CD14-positive monocyte (primary cell): ENCODE measurements at regions of chr3 and their contacts with region 1.

Region 1: GRCh38 chr3:87710511-87710910 is 348.3 kb downstream of the CGGBP1 start:
- DNase-seq: peak in 1 of 3 donors; percentile 4
- H3K4me3 ChIP-seq: no peak overlapping the region
- H3K4me3 Mint-ChIP-seq: no peak overlapping the region
- H3K27ac ChIP-seq: no peak overlapping the region
- H3K27ac Mint-ChIP-seq: no peak overlapping the region
- H3K4me1 ChIP-seq: peaks cover 13 to 26% of the 10 kb centered on the region in 2 donors
- H3K4me1 Mint-ChIP-seq: peaks cover 29% of the 10 kb centered on the region
- H3K27me3 ChIP-seq: no peaks in the 10 kb centered on the region
- H3K27me3 Mint-ChIP-seq: peaks cover 0 to 1% (median 1%) of the 10 kb centered on the region in 3 donors
- CTCF ChIP-seq: no peak

Region 2: GRCh38 chr3:87742250-87742649 is 31.7 kb after region 1 on chr3:
- intact Hi-C with region 1: no loop called
- DNase-seq: no peak
- H3K4me3 ChIP-seq: no peak overlapping the region
- H3K4me3 Mint-ChIP-seq: no peak overlapping the region
- H3K27ac ChIP-seq: no peak overlapping the region
- H3K27ac Mint-ChIP-seq: no peak overlapping the region
- H3K4me1 ChIP-seq: no peaks in the 10 kb centered on the region
- H3K4me1 Mint-ChIP-seq: no peaks in the 10 kb centered on the region
- H3K27me3 ChIP-seq: no peaks in the 10 kb centered on the region
- H3K27me3 Mint-ChIP-seq: peaks cover 0 to 2% (median 0%) of the 10 kb centered on the region in 3 donors
- CTCF ChIP-seq: no peak

Region 3: DNA sequence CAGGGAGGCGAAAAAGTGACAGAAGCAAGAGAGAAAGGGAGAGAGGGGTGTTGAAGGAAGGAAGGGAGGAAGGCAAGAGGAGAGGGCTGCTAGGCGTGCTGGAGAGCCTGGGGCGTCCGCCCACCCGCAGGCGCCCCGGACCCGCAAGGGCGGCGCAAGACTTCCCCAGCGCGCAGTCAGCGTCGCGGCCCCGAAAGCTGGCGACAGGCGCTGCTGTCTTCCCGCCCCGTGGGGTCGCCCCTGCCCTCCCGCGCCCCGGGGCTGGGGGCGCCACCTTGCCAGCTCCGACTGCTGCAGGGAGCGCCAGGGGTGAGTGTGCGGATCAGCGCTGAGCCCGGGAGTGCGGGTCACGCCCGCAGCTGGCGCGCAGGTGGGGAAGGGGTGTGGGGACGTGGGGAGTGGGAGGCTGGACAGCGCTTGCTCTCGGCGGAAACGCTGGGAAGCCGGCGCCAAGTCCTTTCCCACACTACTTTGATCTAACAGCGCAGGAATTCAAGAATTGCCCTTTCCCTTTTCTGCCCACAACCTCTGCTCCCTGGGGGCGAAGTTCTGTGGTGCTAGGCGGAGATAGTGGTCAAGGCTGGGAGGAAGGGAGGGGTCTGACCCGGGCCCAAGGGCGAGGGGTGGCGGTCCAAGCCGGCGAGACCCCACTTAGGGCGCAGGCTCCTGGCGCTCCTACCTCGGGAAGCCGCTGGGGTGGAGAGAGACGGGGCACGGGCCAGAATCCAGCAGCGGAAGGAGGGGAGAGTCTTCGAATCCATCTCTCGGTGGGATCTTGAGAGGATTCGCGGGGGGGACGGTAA is 82.2 kb after region 1 on chr3:
- intact Hi-C with region 1: loop called in 1 of 2 experiments (anchors 10 kb)
- DNase-seq: peak in 1 of 3 donors; percentile 17
- H3K4me3 ChIP-seq: peak within 1 kb of the TSS; percentile 47 to 75 (median 52)
- H3K4me3 Mint-ChIP-seq: peak within 1 kb of the TSS; percentile 95 to 100
- H3K27ac ChIP-seq: no peak within 1 kb of the TSS
- H3K27ac Mint-ChIP-seq: peak within 1 kb of the TSS in 2 of 7 donors; percentile 16 to 54
- H3K4me1 ChIP-seq: peaks cover 41 to 51% of the 10 kb centered on the region in 2 donors
- H3K4me1 Mint-ChIP-seq: peaks cover 57% of the 10 kb centered on the region
- H3K27me3 ChIP-seq: peaks cover 25 to 37% of the 10 kb centered on the region in 2 donors
- H3K27me3 Mint-ChIP-seq: peaks cover 28 to 30% (median 30%) of the 10 kb centered on the region in 3 donors
- CTCF ChIP-seq: no peak